Left cardiac atrium (tissue), 4 donors: ENCODE measurements at regions of chr15 and their contacts with region 1.

Region 1: GRCh38 chr15:92930776-92931175 is 30.7 kb downstream of the CHD2 start:
- DNase-seq: no peak
- ATAC-seq: peak in 1 of 2 donors; percentile 58

Region 2: GRCh38 chr15:92733934-92734521 is 196.7 kb before region 1 on chr15:
- intact Hi-C with region 1: no loop called
- DNase-seq: peak; percentile 31
- ATAC-seq: peak; percentile 88 to 91

Region 3: DNA sequence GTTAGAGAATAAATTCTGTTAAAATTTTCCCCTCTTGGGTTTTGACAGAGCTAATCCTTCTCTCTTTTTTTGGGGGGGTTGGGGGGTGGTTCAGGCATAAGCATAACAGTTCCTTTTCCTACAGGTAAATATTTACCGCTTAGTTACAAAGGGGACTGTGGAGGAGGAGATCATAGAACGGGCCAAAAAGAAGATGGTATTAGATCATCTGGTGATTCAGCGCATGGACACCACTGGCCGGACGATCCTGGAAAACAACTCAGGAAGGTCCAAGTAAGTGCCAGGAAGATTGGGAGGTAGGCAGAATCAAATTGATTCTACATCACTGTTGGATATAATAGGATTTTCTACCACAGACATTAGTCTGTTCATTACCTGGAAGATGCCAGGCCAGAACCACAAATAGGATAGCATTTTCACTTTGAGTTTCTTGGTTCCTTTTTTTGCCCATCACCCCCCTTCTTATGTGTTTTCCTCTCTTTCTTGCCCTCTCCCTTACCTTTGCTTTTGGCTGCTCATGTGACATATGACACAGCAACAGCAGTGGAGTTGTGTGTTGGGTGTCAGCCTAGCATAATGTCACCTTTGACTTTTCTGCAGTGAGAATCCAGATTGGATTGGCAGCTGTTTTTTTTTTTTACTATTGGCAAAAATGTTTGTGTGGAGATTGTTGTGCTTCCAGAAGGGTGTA is 48.4 kb after region 1 on chr15:
- intact Hi-C with region 1: no loop called
- DNase-seq: no peak
- ATAC-seq: peak in 1 of 2 donors; percentile 40

Region 4: DNA sequence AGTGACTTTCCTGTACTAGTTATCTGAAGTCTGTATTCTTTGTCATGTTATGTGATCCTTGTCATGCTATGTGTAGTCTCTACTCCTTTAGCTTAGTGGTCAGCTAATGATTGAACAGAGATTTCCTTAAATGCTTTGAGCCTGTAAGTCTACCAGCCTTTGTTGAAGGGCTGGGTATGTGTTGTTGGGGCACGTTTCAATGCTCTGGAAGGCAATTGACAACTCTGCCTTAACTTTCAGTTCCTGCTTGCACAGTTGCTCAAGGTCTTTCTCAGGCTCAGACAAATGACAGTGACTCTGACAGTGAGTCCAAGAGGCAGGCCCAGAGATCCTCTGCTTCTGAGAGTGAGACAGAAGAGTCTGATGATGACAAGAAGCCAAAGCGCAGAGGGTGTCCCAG is 58.7 kb after region 1 on chr15:
- intact Hi-C with region 1: loop called in 1 of 2 experiments (anchors 10 kb)
- DNase-seq: no peak
- ATAC-seq: no peak